ENCODE measurements at regions of chr14 and their contacts with region 1.

Region 1: GRCh38 chr14:52473557-52473956 is 78.7 kb downstream of the TXNDC16 start:
- DNase-seq: no peak

Region 2: GRCh38 chr14:52299692-52300278 is 173.8 kb before region 1 on chr14:
- intact Hi-C with region 1: loop called (anchors 5 kb)
- DNase-seq: no peak

Region 3: GRCh38 chr14:52391881-52392615 is 81.5 kb before region 1 on chr14:
- intact Hi-C with region 1: no loop called
- DNase-seq: no peak

Region 4: DNA sequence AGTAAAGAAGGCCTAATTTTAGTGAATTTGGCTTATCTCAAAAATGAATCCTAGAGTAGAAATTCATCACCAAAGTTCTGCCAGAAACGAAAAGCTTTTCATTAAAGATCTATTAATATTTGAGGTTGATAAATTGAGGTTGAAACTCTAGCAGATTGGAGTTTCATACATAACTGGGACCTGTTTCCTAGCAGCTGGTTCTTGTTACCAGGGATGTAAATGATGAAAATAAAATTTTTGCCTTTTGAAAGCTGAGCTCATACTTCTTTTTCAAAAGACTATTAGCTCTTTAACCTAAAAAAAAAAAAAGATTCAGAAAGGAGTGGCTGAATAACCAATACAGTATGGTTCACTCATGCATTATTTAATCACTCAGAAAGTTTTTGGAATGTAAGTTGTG is 61.1 kb before region 1 on chr14:
- intact Hi-C with region 1: no loop called
- DNase-seq: no peak

Measured in cardiac septum (tissue), 1 donor.